ENCODE measurements at regions of chr17 and their contacts with region 1.

Region 1: GRCh38 chr17:32495359-32496231 is 8.8 kb downstream of the CDK5R1 start:
- DNase-seq: peak in 6 of 10 donors; percentile 47 to 94 (median 72)

Region 2: GRCh38 chr17:32546031-32546444 is 50.4 kb after region 1 on chr17:
- intact Hi-C with region 1: loop called (anchors 10 kb)
- DNase-seq: peak; percentile 36 to 95 (median 68)

Region 3: GRCh38 chr17:33072421-33073196 is 577.0 kb after region 1 on chr17:
- intact Hi-C with region 1: no loop called
- DNase-seq: no peak

Region 4: GRCh38 chr17:34285286-34285792 is 1789.7 kb after region 1 on chr17 and contains the start of gene CCL11:
- intact Hi-C with region 1: no loop called
- DNase-seq: no peak

Measured in posterior cingulate gyrus (tissue), 11 donors.